ENCODE measurements at regions of chr22 and their contacts with region 1.

Region 1: DNA sequence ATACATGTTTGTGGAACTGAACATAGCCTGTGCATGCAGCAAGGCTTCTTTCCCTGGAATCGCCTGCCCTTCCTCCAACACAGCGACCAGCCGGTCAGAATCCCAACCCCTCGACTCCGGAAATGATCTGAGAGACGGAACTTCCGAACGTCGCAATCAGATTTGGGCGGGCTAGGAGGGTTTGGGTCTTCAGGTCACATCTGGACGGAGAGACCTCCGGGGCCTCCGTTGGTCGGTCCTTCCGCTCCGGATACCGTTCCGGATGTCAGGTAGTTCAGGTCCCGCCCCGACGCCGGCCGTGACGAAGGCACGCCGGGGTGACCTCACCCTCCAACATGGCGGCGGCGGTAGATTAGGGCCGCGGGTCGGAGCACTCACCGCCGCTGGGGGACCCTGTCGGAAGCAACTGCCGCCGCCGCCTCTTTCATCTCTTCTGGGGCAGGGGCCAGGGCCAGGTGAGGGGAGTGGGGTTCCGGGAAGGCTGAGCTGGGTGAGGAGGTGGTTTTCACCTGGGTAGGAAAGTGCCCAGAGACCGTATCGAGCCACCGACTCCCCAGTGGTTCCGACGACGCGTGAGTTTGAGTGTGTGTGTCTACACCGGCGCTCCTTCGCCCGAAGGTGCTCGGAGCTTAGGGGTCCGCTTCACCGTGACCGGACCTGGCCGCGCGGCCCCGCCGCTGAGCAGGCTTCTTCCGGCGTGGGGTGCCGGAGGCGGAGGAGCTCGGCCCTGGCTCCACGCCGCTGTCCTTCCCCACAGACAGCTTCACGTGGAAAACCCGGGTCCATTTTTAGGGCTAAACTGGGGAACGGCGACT is at the start of gene BCL2L13:
- DNase-seq: peak; percentile 93
- H3K4me3 Mint-ChIP-seq: peak within 1 kb of the TSS; percentile 92
- H3K27ac Mint-ChIP-seq: peak within 1 kb of the TSS; percentile 95
- H3K4me1 Mint-ChIP-seq: peaks cover 39% of the 10 kb centered on the region
- H3K27me3 Mint-ChIP-seq: no peaks in the 10 kb centered on the region
- total RNA-seq, gene BCL2L13: 29.4 to 30.4 TPM

Region 2: DNA sequence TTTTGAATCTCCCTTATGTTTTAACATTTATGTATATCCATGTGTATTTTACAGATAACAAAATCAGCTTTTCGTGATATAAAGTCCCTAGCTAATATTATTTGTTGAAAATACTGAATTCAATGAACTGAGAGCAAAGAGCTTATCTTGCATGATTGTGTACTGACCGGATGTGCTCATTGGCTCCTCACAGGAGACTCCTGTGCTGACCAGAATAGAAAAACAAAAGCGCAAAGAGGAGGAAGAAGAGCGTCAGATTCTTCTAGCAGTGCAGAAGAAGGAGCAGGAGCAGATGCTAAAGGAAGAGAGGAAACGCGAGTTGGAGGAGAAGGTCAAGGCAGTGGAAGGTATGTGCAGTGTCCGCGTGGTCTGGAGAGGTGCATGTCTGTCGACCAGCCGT is 114.7 kb before region 1 on chr22:
- CTCF ChIA-PET with region 1: no interaction called
- POLR2A ChIA-PET with region 1: no interaction called
- DNase-seq: no peak
- H3K4me3 Mint-ChIP-seq: no peak overlapping the region
- H3K27ac Mint-ChIP-seq: no peak overlapping the region
- H3K4me1 Mint-ChIP-seq: peaks cover 3% of the 10 kb centered on the region
- H3K27me3 Mint-ChIP-seq: peaks cover 31% of the 10 kb centered on the region

Region 3: DNA sequence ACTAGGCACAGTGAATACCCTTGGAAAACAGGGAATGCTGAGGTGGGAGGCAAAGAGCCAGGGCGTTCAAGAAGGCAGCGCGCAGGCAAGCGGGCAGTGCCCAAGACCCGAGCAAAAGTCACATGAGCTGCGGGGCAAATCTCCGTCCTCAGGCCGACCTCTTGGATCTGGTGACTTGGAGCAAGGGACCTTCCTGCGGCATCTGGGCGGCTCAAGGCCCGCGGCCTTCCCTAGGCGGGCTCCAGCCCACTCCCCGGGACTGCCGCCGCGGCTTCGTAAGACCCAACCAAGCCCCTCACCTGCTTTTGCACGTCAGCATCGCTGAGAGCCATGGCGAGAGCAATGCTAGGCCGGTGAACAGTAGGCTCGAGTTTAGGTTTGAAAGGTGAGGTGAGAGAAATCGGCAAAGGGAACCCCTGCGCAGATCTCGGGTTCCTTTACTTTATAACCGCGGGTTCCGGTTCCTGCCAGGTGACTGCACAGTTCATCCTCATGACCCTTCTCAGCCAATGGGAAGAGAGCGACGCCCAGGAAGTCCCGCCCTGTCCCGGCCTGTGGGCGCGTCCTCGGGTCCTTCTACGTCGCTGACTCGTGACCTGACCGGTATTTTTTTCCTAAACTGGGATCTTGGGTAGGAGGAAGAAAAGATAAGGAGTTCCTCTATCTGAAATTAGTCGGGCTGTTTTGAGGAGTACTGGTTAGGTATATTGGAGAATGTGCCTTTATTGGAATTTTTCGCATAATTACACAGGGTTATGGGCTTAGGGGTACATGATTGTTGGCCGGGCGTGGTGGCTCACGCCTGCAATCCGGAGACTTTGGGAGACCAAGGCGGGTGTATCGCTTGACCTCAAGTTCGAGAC is 10.1 kb before region 1 on chr22 and contains the start of gene ATP6V1E1:
- CTCF ChIA-PET with region 1: interaction called, 3 read pairs
- POLR2A ChIA-PET with region 1: interaction called, 37 read pairs
- DNase-seq: peak; percentile 96
- H3K4me3 Mint-ChIP-seq: peak within 1 kb of the TSS; percentile 95
- H3K27ac Mint-ChIP-seq: peak within 1 kb of the TSS; percentile 88
- H3K4me1 Mint-ChIP-seq: peaks cover 40% of the 10 kb centered on the region
- H3K27me3 Mint-ChIP-seq: no peaks in the 10 kb centered on the region
- total RNA-seq, gene ATP6V1E1: 103 TPM

Region 4: GRCh38 chr22:17773606-17774205 is 135.1 kb after region 1 on chr22:
- CTCF ChIA-PET with region 1: no interaction called
- POLR2A ChIA-PET with region 1: interaction called, 13 read pairs
- DNase-seq: peak; percentile 75
- H3K4me3 Mint-ChIP-seq: peak overlapping the region; percentile 79
- H3K27ac Mint-ChIP-seq: no peak overlapping the region
- H3K4me1 Mint-ChIP-seq: peaks cover 52% of the 10 kb centered on the region
- H3K27me3 Mint-ChIP-seq: peaks cover 33% of the 10 kb centered on the region

Region 5: GRCh38 chr22:18152519-18152918 is 513.9 kb after region 1 on chr22:
- CTCF ChIA-PET with region 1: no interaction called
- POLR2A ChIA-PET with region 1: interaction called, 11 read pairs
- DNase-seq: peak; percentile 51
- H3K4me3 Mint-ChIP-seq: peak overlapping the region; percentile 93
- H3K27ac Mint-ChIP-seq: peak overlapping the region; percentile 48
- H3K4me1 Mint-ChIP-seq: peaks cover 70% of the 10 kb centered on the region
- H3K27me3 Mint-ChIP-seq: no peaks in the 10 kb centered on the region

Measured in activated CD4-positive, alpha-beta memory T cell treated with anti-CD3 and anti-CD28 coated beads, Interleukin-2, amount 10 ng/mL, durations not matched to agents 7 days and 5 days (primary cell).